ENCODE measurements at regions of chr7 and their contacts with region 1.

Region 1: GRCh38 chr7:4319280-4319679 is 362.8 kb upstream of the FOXK1 start:
- DNase-seq: no peak
- H3K4me3 ChIP-seq: no peak overlapping the region
- H3K27ac ChIP-seq: no peak overlapping the region
- H3K4me1 ChIP-seq: no peaks in the 10 kb centered on the region
- H3K27me3 ChIP-seq: no peaks in the 10 kb centered on the region
- CTCF ChIP-seq: no peak
- POLR2A ChIP-seq: no peak

Region 2: GRCh38 chr7:4383584-4383983 is 64.3 kb after region 1 on chr7:
- intact Hi-C with region 1: loop called in 1 of 2 experiments (anchors 10 kb)
- DNase-seq: no peak
- H3K4me3 ChIP-seq: no peak overlapping the region
- H3K27ac ChIP-seq: no peak overlapping the region
- H3K4me1 ChIP-seq: no peaks in the 10 kb centered on the region
- H3K27me3 ChIP-seq: no peaks in the 10 kb centered on the region
- CTCF ChIP-seq: no peak
- POLR2A ChIP-seq: no peak

Measured in adrenal gland (tissue), 19 donors.